Endothelial cell of umbilical vein (primary cell): ENCODE measurements at regions of chr6 and their contacts with region 1.

Region 1: GRCh38 chr6:2103644-2104523 is 141.5 kb downstream of the GMDS start:
- DNase-seq: peak; percentile 84
- H3K4me3 ChIP-seq: peak overlapping the region in 2 of 3 experiments; percentile 1 to 47
- H3K27ac ChIP-seq: peak overlapping the region; percentile 46
- H3K4me1 ChIP-seq: peaks cover 21% of the 10 kb centered on the region
- H3K27me3 ChIP-seq: no peaks in the 10 kb centered on the region
- CTCF ChIP-seq: peak; percentile 37 to 40
- POLR2A ChIP-seq: no peak

Region 2: DNA sequence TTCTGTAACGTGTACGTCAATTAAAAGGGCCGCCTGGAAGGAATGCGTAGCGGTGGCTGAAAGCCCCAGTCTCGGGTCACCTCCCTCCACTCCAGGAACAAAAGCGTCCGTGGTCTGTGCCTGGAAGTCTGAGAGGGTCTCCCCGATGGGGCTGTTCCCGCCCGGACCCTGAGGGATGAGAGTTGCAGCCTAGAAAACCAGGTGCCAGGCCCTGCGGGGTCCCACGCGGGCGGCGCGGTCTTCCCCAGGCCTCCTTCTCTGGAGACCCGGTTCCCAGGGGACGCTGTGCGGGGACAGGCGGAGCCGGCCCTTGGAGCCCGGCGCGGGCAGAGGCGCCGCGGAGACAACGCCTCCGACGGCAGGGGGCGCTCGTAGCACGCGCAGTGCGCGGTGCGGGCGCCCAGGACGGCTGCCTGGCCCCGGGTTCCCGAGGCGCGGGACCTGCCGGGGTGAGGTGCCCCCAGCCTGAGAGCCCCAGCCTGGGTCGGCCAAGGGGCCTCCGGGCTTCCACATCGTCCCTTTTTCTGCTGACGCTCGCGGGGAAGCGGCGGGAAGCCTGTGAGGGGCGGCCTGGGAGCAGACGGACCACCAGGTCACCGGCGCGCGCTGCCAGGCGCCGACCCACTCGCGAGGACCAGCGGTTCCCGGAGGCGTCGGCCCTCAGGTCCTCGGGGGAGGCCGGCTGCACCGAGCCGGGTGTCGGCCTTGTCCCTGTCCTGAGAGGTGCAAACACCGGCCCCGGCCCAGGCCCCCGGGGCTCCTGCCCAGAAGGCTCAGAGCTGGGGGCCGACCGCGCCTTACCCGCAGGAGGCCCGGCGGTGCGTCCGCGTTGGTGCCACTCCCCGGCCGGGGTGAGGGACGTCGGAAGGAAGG is 499.5 kb before region 1 on chr6:
- CTCF ChIA-PET with region 1: interaction called, 49 read pairs
- POLR2A ChIA-PET with region 1: no interaction called
- dilution Hi-C with region 1: loop called (anchors 25 kb)
- intact Hi-C with region 1: loop called (anchors 1 kb)
- DNase-seq: peak; percentile 63
- H3K4me3 ChIP-seq: peak overlapping the region; percentile 33 to 38 (median 36)
- H3K27ac ChIP-seq: no peak overlapping the region
- H3K4me1 ChIP-seq: peaks cover 3% of the 10 kb centered on the region
- H3K27me3 ChIP-seq: peaks cover 12 to 16% of the 10 kb centered on the region in 2 experiments
- CTCF ChIP-seq: peak; percentile 87 to 91
- POLR2A ChIP-seq: no peak

Region 3: DNA sequence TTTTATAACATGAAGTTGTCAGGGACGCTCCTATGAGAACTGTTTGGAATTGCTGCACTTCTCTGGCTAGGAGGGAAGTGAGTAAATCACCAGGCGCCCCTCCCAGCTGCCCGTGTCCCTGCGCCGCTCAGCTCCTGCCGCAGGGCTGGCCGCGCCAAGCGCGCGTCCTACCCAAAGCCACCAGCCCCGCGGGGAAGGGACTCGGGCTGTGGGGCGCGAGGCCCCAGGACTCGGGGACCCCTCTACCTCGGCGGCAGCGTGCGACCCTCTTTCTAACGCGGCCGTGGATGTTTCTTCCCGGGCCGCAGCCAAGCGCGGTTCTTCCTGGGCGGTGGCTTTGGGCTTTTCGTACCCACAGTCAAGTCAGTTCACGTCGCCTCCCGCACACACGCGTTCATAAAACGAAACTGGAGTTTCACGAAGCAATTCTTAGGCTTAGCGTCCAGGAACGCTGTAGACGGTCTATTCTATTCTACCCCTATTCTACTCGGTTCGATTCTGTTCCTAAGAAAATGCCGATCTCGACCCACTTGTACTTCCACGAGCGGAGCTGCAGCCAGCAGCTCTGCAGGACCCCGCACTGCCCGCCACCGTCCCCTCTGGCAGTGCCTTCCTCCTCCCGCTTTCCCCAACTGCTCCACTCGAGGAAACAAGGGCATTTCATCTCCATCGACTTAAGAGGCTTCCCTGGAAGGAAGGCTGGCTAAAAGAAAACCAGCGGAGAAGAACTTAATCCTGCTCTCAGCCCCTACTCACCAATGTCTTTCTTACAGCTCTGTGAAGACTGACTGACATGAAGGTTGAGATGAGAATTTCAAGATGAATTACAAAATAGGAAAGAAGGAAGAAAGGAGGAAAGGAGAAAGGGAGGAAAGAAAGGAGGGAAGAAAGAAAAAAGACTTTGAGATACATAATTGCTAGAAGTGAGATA is 478.8 kb before region 1 on chr6:
- CTCF ChIA-PET with region 1: interaction called, 17 read pairs
- POLR2A ChIA-PET with region 1: no interaction called
- dilution Hi-C with region 1: loop called (anchors 25 kb)
- intact Hi-C with region 1: no loop called
- DNase-seq: peak; percentile 73
- H3K4me3 ChIP-seq: peak overlapping the region; percentile 59 to 86 (median 69)
- H3K27ac ChIP-seq: peak overlapping the region; percentile 3
- H3K4me1 ChIP-seq: peaks cover 21% of the 10 kb centered on the region
- H3K27me3 ChIP-seq: peaks cover 5 to 15% of the 10 kb centered on the region in 2 experiments
- CTCF ChIP-seq: no peak
- POLR2A ChIP-seq: no peak

Region 4: DNA sequence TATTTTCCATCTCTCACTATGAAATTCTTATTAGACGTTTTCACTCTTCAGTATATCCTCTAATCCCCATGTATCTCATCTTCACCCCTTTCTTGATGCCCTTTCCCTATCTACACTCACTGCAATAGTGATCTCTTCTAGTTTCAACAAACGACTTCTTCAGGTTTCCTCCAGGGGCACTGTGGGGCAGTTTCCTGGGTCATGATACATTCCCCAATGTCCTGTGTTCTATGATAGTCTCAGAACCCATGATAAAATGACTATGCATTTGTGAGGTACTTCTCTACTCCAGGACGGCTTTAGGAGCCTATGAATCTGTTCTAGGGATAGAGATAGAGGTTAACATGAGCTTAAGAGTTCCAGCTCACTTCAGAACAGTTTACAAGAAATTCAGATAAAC is 310.9 kb before region 1 on chr6:
- CTCF ChIA-PET with region 1: interaction called, 3 read pairs
- POLR2A ChIA-PET with region 1: no interaction called
- dilution Hi-C with region 1: loop called (anchors 25 kb)
- intact Hi-C with region 1: no loop called
- DNase-seq: no peak
- H3K4me3 ChIP-seq: no peak overlapping the region
- H3K27ac ChIP-seq: no peak overlapping the region
- H3K4me1 ChIP-seq: peaks cover 34% of the 10 kb centered on the region
- H3K27me3 ChIP-seq: no peaks in the 10 kb centered on the region
- CTCF ChIP-seq: peak; percentile 11 to 33
- POLR2A ChIP-seq: no peak

Region 5: DNA sequence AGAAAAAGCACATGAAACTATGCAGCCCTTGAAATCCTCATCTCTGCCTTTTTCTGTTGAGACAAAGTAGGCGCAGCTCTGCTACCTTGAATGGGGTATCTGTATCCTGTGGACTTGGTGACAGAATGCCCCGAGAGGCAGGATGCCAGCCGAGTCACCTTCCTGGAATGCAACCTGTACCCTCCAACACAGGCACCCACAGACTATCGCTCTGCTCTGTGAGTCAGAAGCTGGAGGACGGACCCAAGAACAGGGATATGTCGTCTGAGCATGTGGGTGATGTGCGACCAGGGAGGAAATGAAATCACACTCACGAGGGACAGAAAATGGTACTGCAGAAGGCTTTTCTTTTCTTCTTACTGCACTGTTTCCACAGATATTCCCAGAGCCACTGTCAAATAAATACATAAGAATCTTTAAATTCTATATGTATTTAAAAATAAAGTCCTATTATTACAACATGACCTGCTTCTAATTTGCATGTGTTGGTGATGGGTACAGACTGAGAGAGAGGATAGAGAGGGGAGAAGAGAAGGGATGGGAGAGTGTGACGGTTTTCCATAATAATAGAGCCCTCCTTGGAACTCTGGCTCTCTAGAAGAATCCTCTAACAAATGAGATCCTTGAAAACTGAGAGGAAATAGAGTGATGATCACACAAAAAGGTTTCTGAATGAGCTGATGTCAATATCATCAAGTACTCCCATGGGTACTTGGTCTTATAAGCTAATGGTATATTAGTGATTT is 186.1 kb before region 1 on chr6:
- CTCF ChIA-PET with region 1: interaction called, 4 read pairs
- POLR2A ChIA-PET with region 1: no interaction called
- dilution Hi-C with region 1: no loop called
- intact Hi-C with region 1: loop called (anchors 2 kb)
- DNase-seq: peak; percentile 86
- H3K4me3 ChIP-seq: no peak overlapping the region
- H3K27ac ChIP-seq: peak overlapping the region; percentile 75
- H3K4me1 ChIP-seq: peaks cover 18% of the 10 kb centered on the region
- H3K27me3 ChIP-seq: no peaks in the 10 kb centered on the region
- CTCF ChIP-seq: no peak
- POLR2A ChIP-seq: no peak

Region 6: GRCh38 chr6:2448820-2449571 is 345.1 kb after region 1 on chr6:
- CTCF ChIA-PET with region 1: interaction called, 3 read pairs
- POLR2A ChIA-PET with region 1: no interaction called
- dilution Hi-C with region 1: no loop called
- intact Hi-C with region 1: loop called (anchors 2 kb)
- DNase-seq: peak; percentile 86
- H3K4me3 ChIP-seq: peak overlapping the region in 2 of 3 experiments; percentile 4 to 64
- H3K27ac ChIP-seq: no peak overlapping the region
- H3K4me1 ChIP-seq: peaks cover 4% of the 10 kb centered on the region
- H3K27me3 ChIP-seq: peaks cover under 1 to 2% of the 10 kb centered on the region in 2 experiments
- CTCF ChIP-seq: peak; percentile 60 to 69
- POLR2A ChIP-seq: no peak